ENCODE measurements at regions of chr9 and their contacts with region 1.

Region 1: GRCh38 chr9:72271613-72272478 is 93.2 kb downstream of the ZFAND5 start:
- DNase-seq: no peak
- H3K4me3 Mint-ChIP-seq: no peak overlapping the region
- H3K27ac Mint-ChIP-seq: no peak overlapping the region
- H3K4me1 Mint-ChIP-seq: no peaks in the 10 kb centered on the region
- H3K27me3 Mint-ChIP-seq: peaks cover 15% of the 10 kb centered on the region

Region 2: GRCh38 chr9:71048280-71048679 is 1223.6 kb before region 1 on chr9:
- intact Hi-C with region 1: no loop called
- DNase-seq: no peak
- H3K4me3 Mint-ChIP-seq: no peak overlapping the region
- H3K27ac Mint-ChIP-seq: no peak overlapping the region
- H3K4me1 Mint-ChIP-seq: no peaks in the 10 kb centered on the region
- H3K27me3 Mint-ChIP-seq: no peaks in the 10 kb centered on the region

Region 3: GRCh38 chr9:71885467-71885866 is 386.4 kb before region 1 on chr9:
- intact Hi-C with region 1: no loop called
- DNase-seq: no peak
- H3K4me3 Mint-ChIP-seq: peak overlapping the region; percentile 12
- H3K27ac Mint-ChIP-seq: peak overlapping the region; percentile 71
- H3K4me1 Mint-ChIP-seq: peaks cover 39% of the 10 kb centered on the region
- H3K27me3 Mint-ChIP-seq: no peaks in the 10 kb centered on the region

Region 4: GRCh38 chr9:72038890-72039410 is 232.9 kb before region 1 on chr9:
- intact Hi-C with region 1: loop called (anchors 1 kb)
- DNase-seq: peak; percentile 36
- H3K4me3 Mint-ChIP-seq: no peak overlapping the region
- H3K27ac Mint-ChIP-seq: no peak overlapping the region
- H3K4me1 Mint-ChIP-seq: peaks cover 6% of the 10 kb centered on the region
- H3K27me3 Mint-ChIP-seq: peaks cover 11% of the 10 kb centered on the region

Region 5: DNA sequence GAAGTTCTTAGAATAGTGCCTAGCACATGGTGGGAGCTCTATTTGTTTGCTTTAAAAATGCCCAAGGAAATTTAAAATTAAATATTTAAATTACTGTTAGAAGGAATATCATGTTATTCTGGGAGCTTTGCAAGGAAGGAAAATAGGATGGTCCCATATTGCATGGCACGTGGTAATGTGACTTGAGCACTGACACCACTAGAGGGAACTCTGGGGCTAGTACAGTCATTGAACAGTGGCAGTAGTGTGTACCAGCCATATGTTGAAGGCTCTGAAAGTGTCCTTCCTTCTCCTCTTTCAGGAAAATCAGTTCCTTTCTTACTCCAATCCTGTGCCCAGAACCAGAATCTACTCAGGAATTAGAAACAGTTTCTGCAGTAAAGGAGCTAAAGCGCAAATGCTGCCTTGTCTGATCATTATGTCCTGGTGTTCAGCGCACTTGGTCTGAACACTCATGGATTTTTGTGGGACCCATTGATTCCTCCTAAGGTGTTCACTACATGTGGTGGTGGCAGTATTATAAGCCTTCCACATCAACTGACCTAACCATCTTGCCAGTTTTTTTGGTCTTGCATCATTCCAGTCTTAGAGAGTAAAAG is 68.5 kb before region 1 on chr9:
- intact Hi-C with region 1: loop called (anchors 1 kb)
- DNase-seq: no peak
- H3K4me3 Mint-ChIP-seq: no peak overlapping the region
- H3K27ac Mint-ChIP-seq: no peak overlapping the region
- H3K4me1 Mint-ChIP-seq: no peaks in the 10 kb centered on the region
- H3K27me3 Mint-ChIP-seq: peaks cover 3% of the 10 kb centered on the region